ENCODE measurements at regions of chr1 and their contacts with region 1.

Region 1: DNA sequence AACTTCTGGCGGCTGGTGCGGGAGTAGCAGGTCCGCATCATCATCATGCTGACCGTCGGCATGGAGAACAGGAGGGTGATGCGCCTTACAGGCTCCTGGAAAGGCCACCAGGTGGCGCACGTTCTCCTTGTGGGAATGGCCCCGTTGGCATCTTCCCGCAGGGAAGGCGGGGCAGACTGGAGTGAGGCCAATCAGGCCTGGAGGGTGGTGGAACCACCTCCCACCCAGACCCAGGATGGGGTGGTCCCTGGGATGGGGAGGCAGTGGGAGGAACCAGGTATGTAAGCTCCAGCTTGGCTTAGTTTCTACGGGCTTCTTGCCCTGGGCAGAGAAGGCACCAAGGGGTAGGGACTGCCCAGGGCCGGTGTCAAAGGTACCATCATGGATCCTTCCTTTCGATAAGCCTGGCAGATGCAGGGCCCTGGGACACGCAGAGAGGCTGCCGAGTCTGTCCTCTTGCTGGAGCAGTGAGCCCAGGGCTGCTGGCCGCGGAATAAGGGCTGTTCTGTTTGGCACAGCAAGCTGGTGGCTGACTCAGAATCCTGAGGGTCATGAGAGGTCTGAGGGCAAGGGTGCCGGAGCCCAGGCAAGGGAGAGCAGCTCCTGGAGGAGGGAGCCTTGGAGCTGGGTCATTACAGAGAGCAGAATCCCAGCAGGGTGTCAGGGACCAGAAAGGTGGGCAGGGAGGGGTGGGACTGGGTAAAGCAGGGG is 8.7 kb upstream of the LGR6 start:
- DNase-seq: peak; percentile 89
- ATAC-seq: peak; percentile 75

Region 2: GRCh38 chr1:202315576-202316168 is 130.8 kb after region 1 on chr1:
- intact Hi-C with region 1: loop called (anchors 5 kb)
- DNase-seq: peak; percentile 83
- ATAC-seq: peak; percentile 79

Region 3: GRCh38 chr1:202710070-202711045 is 525.5 kb after region 1 on chr1 and contains the start of gene SYT2:
- intact Hi-C with region 1: loop called (anchors 10 kb)
- DNase-seq: peak; percentile 63
- ATAC-seq: peak; percentile 58
- total RNA-seq, gene SYT2: not detected

Measured in sciatic nerve (tissue), 2 donors.